Activated CD4-positive, alpha-beta T cell treated with anti-CD3 and anti-CD28 coated beads for 36 hours (primary cell): ENCODE measurements at regions of chr12 and their contacts with region 1.

Region 1: GRCh38 chr12:103441437-103442181 is 54.2 kb downstream of the C12orf42 start:
- DNase-seq: peak; percentile 40
- ATAC-seq: peak; percentile 97
- H3K4me3 Mint-ChIP-seq: peak overlapping the region; percentile 2
- H3K27ac Mint-ChIP-seq: peak overlapping the region; percentile 44
- H3K4me1 Mint-ChIP-seq: peaks cover 18% of the 10 kb centered on the region
- H3K27me3 Mint-ChIP-seq: no peaks in the 10 kb centered on the region

Region 2: DNA sequence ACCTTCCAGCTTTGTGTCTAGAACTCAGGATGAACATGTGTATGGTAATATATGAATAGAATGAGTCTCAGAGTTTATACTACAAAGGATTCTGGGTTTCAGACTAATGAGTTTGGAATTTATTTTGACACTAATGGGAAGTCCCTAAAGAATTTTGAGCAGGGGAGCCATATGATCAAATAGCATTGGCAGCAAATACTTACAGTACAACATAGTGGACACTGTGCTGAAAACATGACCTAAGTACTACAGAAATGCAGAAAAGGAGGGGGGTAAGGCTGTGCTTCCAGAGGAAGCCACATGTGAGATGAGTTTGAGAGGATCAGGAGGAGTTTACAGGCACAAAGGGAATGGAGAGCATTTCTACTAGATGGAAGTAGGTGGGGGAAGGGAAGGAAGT is 171.7 kb before region 1 on chr12:
- CTCF ChIA-PET with region 1: no interaction called
- POLR2A ChIA-PET with region 1: no interaction called
- intact Hi-C with region 1: loop called in 1 of 2 experiments (anchors 5 kb)
- DNase-seq: no peak
- ATAC-seq: no peak
- H3K4me3 Mint-ChIP-seq: no peak overlapping the region
- H3K27ac Mint-ChIP-seq: no peak overlapping the region
- H3K4me1 Mint-ChIP-seq: peaks cover 13% of the 10 kb centered on the region
- H3K27me3 Mint-ChIP-seq: no peaks in the 10 kb centered on the region

Region 3: GRCh38 chr12:103495479-103496456 is 54.2 kb after region 1 on chr12 and contains the start of gene C12orf42:
- CTCF ChIA-PET with region 1: no interaction called
- POLR2A ChIA-PET with region 1: no interaction called
- intact Hi-C with region 1: loop called in 1 of 2 experiments (anchors 5 kb)
- DNase-seq: peak; percentile 67
- ATAC-seq: peak; percentile 47
- H3K4me3 Mint-ChIP-seq: peak within 1 kb of the TSS; percentile 58
- H3K27ac Mint-ChIP-seq: no peak within 1 kb of the TSS
- H3K4me1 Mint-ChIP-seq: peaks cover 23% of the 10 kb centered on the region
- H3K27me3 Mint-ChIP-seq: peaks cover 36% of the 10 kb centered on the region
- total RNA-seq, gene C12orf42: 0.23 TPM in 1 of 2 experiments, not detected in the other